Motor neuron (in vitro differentiated cells): ENCODE measurements at regions of chr10 and their contacts with region 1.

Region 1: GRCh38 chr10:67849331-67850011 is 11.5 kb upstream of the DNAJC12 start:
- ATAC-seq: peak; percentile 92 to 100 (median 99)
- H3K4me3 ChIP-seq: peak overlapping the region; percentile 48 to 79 (median 60)
- H3K27ac ChIP-seq: peak overlapping the region; percentile 68 to 91
- H3K4me1 ChIP-seq: peaks cover 4% of the 10 kb centered on the region in 2 donors

Region 2: GRCh38 chr10:66680886-66681285 is 1168.6 kb before region 1 on chr10:
- in situ Hi-C with region 1: no loop called
- ATAC-seq: no peak
- H3K4me3 ChIP-seq: no peak overlapping the region
- H3K27ac ChIP-seq: no peak overlapping the region
- H3K4me1 ChIP-seq: no peaks in the 10 kb centered on the region

Region 3: GRCh38 chr10:67602268-67602950 is 247.1 kb before region 1 on chr10:
- in situ Hi-C with region 1: no loop called
- ATAC-seq: no peak
- H3K4me3 ChIP-seq: no peak overlapping the region
- H3K27ac ChIP-seq: no peak overlapping the region
- H3K4me1 ChIP-seq: no peaks in the 10 kb centered on the region

Region 4: DNA sequence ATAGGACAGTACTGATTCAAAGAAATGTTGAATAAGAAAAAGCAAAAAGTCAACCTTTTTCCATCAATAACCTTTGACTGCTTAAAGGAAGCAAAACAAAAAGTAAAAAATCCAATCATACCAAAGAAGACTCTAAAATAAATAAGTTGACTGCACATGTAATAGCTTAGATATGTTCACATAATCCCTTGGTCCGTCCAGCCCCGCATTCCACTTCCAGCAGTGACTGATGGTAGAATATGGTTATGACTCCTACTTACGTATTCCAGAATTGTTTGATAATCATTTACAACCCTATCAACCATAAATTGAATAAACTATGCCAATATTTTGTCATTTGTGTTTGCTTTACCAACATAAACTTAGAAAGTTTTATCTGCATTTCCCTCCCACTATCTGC is 231.4 kb before region 1 on chr10:
- in situ Hi-C with region 1: no loop called
- ATAC-seq: no peak
- H3K4me3 ChIP-seq: no peak overlapping the region
- H3K27ac ChIP-seq: no peak overlapping the region
- H3K4me1 ChIP-seq: no peaks in the 10 kb centered on the region

Region 5: GRCh38 chr10:68156373-68157185 is 307.1 kb after region 1 on chr10:
- in situ Hi-C with region 1: loop called in 2 of 9 experiments (anchors 25 kb)
- ATAC-seq: peak in 2 of 8 experiments; percentile 9 to 37
- H3K4me3 ChIP-seq: no peak overlapping the region
- H3K27ac ChIP-seq: no peak overlapping the region
- H3K4me1 ChIP-seq: peaks cover 16 to 19% of the 10 kb centered on the region in 2 donors

Region 6: DNA sequence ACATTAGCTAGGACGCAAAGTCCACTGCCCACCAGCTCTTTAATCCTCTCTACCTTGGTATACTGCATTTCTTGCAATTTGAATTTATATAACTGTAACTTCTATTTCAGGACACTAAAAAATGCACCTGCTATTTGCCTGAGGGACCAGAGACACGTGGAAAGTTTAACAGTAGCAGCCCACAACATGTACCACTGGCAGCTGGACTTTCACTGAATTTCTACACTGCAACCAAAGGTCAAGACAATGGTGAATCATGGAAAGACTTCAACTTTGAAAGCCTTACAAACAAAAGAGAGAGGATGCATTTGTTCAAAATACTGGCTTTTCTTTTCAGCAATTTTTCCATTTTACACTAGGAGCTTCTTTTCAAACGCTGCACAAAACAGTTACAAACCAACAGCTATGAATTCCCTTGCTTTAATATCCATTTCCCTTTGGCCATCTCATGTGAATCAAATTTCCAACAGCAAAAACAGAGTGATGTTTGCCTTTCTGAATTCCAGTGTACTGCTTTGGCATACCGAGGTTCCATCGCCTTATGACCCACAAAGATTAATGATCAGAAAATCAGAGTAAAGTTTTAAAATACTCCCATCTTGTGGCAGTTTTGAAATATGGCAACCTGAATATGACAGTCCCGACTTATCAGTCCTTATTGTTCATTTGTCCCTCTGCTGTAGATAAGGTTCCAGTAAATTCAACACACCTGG is 452.5 kb after region 1 on chr10:
- in situ Hi-C with region 1: loop called in 2 of 9 experiments (anchors 25 kb)
- ATAC-seq: peak in 4 of 8 experiments; percentile 35 to 87 (median 78)
- H3K4me3 ChIP-seq: no peak overlapping the region
- H3K27ac ChIP-seq: no peak overlapping the region
- H3K4me1 ChIP-seq: no peaks in the 10 kb centered on the region

Region 7: GRCh38 chr10:68331455-68332258 is 482.2 kb after region 1 on chr10 and contains the start of gene HNRNPH3:
- in situ Hi-C with region 1: loop called in 2 of 9 experiments (anchors 25 kb)
- ATAC-seq: peak; percentile 75 to 93 (median 86)
- H3K4me3 ChIP-seq: peak within 1 kb of the TSS; percentile 76 to 93 (median 81)
- H3K27ac ChIP-seq: peak within 1 kb of the TSS; percentile 97
- H3K4me1 ChIP-seq: peaks cover 20 to 37% of the 10 kb centered on the region in 2 donors
- total RNA-seq, gene HNRNPH3: 43.5 to 183 (median 120) TPM